Activated B cell treated with CpG ODN at 0.5 μM for 24 hours (primary cell): ENCODE measurements at regions of chr1 and their contacts with region 1.

Region 1: DNA sequence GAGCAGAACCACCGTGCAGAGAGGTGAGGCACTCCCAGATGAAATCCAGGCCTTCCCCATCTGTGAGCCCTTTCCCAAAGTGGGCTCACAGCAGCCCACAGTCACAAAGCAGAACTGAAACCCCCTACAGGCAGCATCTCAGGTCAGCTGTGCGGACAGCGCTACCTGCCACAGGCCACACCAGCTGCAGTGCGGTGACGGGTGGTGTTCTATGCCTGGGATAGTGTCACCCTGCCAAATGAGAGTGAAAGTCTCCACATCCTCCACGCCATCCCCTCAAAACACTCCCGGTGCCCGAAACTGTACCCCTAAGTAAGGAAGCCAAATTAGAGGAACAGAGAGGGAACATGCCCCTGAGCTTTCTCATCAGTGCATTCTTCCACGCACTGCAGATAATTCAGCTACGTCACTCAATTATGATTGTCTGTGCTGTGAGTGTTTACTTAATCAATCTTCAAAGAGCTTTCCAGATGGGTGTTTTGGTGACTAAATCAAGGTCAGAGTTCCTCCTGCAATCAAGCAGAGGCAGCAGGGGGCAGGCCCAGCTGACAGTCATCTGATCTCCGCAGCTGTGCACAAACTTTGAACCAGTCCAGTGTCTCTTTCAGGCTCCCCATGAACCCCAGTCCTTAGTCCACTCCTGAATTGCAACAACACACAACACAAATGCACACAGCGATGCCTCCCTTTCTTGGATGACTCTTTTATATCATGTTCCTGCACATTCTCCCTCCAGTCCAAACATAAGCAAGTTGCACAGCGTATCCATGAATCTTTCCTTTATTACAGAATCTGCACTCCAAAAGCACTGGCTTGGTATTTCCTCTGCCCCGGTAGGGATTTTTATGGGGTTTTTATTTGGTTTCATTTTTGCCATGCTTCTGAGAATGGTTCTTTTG is 150.0 kb downstream of the TOMM20 start:
- DNase-seq: peak; percentile 68
- ATAC-seq: peak; percentile 58
- H3K4me3 Mint-ChIP-seq: peak overlapping the region; percentile 77
- H3K27ac Mint-ChIP-seq: peak overlapping the region; percentile 93
- H3K4me1 Mint-ChIP-seq: peaks cover 74% of the 10 kb centered on the region
- H3K27me3 Mint-ChIP-seq: no peaks in the 10 kb centered on the region
- CTCF ChIP-seq: no peak

Region 2: DNA sequence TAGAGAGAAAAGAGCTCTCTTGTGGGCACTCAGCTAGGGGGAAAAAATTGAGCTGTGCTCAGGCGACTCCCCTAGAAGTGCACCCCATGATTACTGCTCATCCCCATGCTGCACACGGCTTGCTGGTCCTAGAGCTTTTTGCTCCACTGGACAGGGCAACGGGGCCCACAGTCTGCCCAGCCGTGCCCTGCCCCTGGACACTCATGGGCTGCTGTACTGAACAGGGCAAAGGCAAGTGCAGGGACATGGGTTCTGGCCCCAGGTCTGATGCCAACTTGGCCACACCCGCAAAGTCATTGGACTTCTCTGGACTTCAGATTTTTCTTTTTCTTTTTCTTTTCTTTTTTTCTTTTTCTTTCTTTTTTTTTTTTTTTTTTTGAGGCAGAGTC is 456.8 kb before region 1 on chr1:
- CTCF ChIA-PET with region 1: no interaction called
- POLR2A ChIA-PET with region 1: no interaction called
- intact Hi-C with region 1: loop called (anchors 1 kb)
- DNase-seq: no peak
- ATAC-seq: no peak
- H3K4me3 Mint-ChIP-seq: no peak overlapping the region
- H3K27ac Mint-ChIP-seq: no peak overlapping the region
- H3K4me1 Mint-ChIP-seq: peaks cover 38% of the 10 kb centered on the region
- H3K27me3 Mint-ChIP-seq: no peaks in the 10 kb centered on the region
- CTCF ChIP-seq: no peak

Region 3: GRCh38 chr1:234755449-234755863 is 223.2 kb before region 1 on chr1:
- CTCF ChIA-PET with region 1: no interaction called
- POLR2A ChIA-PET with region 1: no interaction called
- intact Hi-C with region 1: no loop called
- DNase-seq: no peak
- ATAC-seq: no peak
- H3K4me3 Mint-ChIP-seq: no peak overlapping the region
- H3K27ac Mint-ChIP-seq: no peak overlapping the region
- H3K4me1 Mint-ChIP-seq: peaks cover 3% of the 10 kb centered on the region
- H3K27me3 Mint-ChIP-seq: peaks cover 2% of the 10 kb centered on the region
- CTCF ChIP-seq: no peak

Region 4: DNA sequence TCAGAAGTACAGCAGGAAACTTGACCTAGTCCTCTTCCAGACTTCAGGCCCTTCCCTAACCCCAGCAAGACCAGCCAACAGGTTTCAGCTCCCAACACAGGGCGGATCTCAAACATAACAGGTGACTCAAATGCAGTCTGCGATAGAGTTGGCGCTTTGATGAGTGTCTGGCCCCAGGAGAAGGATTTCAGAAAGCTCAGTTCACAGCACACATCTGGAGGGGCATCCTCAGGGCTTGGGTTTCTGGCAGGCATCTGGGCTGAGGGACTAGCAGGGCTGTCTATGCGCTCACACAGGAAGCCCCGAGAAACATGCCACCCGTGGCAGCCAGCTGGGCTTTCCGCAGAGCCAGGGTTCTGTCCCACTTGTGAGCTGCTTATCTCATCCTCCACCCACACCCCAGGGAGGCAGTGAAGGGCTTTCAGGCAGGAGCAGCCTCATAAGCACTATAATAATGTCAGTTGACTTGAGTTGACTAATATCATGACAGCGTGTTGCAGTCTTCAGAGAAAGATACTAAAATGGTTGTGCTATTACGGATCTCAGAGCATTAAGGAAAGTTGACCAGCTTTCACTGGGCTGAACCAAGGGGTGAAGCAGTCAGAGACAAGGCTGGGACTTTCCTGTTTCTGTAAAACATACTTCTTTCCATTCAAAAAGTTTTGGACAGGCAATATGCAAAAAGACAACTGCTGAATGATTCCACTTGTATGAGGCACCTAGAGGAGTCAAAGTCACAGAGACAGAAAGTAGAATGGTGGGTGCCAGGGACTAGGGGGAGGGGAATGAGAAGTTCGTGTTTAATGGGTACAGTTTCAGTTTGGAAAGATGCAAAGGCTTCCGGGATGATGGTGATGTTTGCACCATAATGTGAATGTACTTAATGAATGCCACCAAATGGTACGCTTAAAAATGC is 135.7 kb before region 1 on chr1:
- CTCF ChIA-PET with region 1: no interaction called
- POLR2A ChIA-PET with region 1: interaction called, 21 read pairs
- intact Hi-C with region 1: no loop called
- DNase-seq: peak; percentile 40
- ATAC-seq: peak; percentile 76
- H3K4me3 Mint-ChIP-seq: peak overlapping the region; percentile 62
- H3K27ac Mint-ChIP-seq: peak overlapping the region; percentile 71
- H3K4me1 Mint-ChIP-seq: peaks cover 52% of the 10 kb centered on the region
- H3K27me3 Mint-ChIP-seq: no peaks in the 10 kb centered on the region
- CTCF ChIP-seq: no peak

Region 5: GRCh38 chr1:234925440-234926263 is 53.0 kb before region 1 on chr1:
- CTCF ChIA-PET with region 1: interaction called, 3 read pairs
- POLR2A ChIA-PET with region 1: interaction called, 4 read pairs
- intact Hi-C with region 1: loop called (anchors 1 kb)
- DNase-seq: no peak
- ATAC-seq: no peak
- H3K4me3 Mint-ChIP-seq: peak overlapping the region; percentile 78
- H3K27ac Mint-ChIP-seq: peak overlapping the region; percentile 78
- H3K4me1 Mint-ChIP-seq: peaks cover 30% of the 10 kb centered on the region
- H3K27me3 Mint-ChIP-seq: no peaks in the 10 kb centered on the region
- CTCF ChIP-seq: no peak

Region 6: GRCh38 chr1:234963180-234963903 is 15.3 kb before region 1 on chr1:
- CTCF ChIA-PET with region 1: interaction called, 4 read pairs
- POLR2A ChIA-PET with region 1: interaction called, 75 read pairs
- intact Hi-C with region 1: loop called (anchors 1 kb)
- DNase-seq: peak; percentile 84
- ATAC-seq: peak; percentile 89
- H3K4me3 Mint-ChIP-seq: peak overlapping the region; percentile 82
- H3K27ac Mint-ChIP-seq: peak overlapping the region; percentile 98
- H3K4me1 Mint-ChIP-seq: peaks cover 66% of the 10 kb centered on the region
- H3K27me3 Mint-ChIP-seq: no peaks in the 10 kb centered on the region
- CTCF ChIP-seq: no peak

Region 7: GRCh38 chr1:235050911-235051360 is 72.3 kb after region 1 on chr1:
- CTCF ChIA-PET with region 1: interaction called, 3 read pairs
- POLR2A ChIA-PET with region 1: interaction called, 59 read pairs
- intact Hi-C with region 1: loop called (anchors 1 kb)
- DNase-seq: peak; percentile 30
- ATAC-seq: peak; percentile 51
- H3K4me3 Mint-ChIP-seq: peak overlapping the region; percentile 24
- H3K27ac Mint-ChIP-seq: peak overlapping the region; percentile 60
- H3K4me1 Mint-ChIP-seq: peaks cover 50% of the 10 kb centered on the region
- H3K27me3 Mint-ChIP-seq: no peaks in the 10 kb centered on the region
- CTCF ChIP-seq: no peak

Region 8: DNA sequence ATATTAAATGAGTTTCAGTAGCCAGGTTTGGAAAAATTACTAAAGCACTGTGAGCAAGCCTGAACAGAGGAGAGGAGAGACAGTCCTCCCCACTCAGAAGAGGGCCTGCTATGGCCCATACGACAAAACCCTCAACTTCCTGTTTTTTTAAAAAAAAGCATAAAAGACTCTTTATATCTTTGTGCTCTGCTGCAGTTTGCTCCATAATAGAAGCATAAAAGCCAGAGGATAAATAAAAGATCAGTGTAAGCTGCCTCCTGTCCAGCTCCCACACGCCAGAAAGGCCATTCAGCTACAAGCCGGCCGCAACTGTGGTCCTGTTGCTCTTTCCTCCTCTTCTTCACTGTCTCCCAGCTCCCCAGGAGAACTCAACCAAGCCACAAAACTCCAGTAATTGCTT is 1048.5 kb after region 1 on chr1:
- CTCF ChIA-PET with region 1: no interaction called
- POLR2A ChIA-PET with region 1: no interaction called
- intact Hi-C with region 1: no loop called
- DNase-seq: no peak
- ATAC-seq: no peak
- H3K4me3 Mint-ChIP-seq: no peak overlapping the region
- H3K27ac Mint-ChIP-seq: no peak overlapping the region
- H3K4me1 Mint-ChIP-seq: no peaks in the 10 kb centered on the region
- H3K27me3 Mint-ChIP-seq: no peaks in the 10 kb centered on the region
- CTCF ChIP-seq: no peak